Mammary epithelial cell (primary cell): ENCODE measurements at regions of chr6 and their contacts with region 1.

Region 1: GRCh38 chr6:166556871-166557322 is 29.6 kb downstream of the RAMACL start:
- DNase-seq: peak; percentile 99
- H3K4me3 ChIP-seq: peak overlapping the region in 1 of 3 experiments; percentile 17
- H3K27ac ChIP-seq: peak overlapping the region; percentile 83
- H3K4me1 ChIP-seq: peaks cover 57% of the 10 kb centered on the region
- H3K27me3 ChIP-seq: no peaks in the 10 kb centered on the region
- CTCF ChIP-seq: peak in 1 of 2 donors; percentile 2

Region 2: GRCh38 chr6:166567107-166567506 is 10.2 kb after region 1 on chr6:
- CTCF ChIA-PET with region 1: no interaction called
- dilution Hi-C with region 1: no loop called
- in situ Hi-C with region 1: no loop called
- intact Hi-C with region 1: loop called (anchors 1 kb)
- DNase-seq: peak; percentile 98
- H3K4me3 ChIP-seq: no peak overlapping the region
- H3K27ac ChIP-seq: peak overlapping the region; percentile 69
- H3K4me1 ChIP-seq: peaks cover 28% of the 10 kb centered on the region
- H3K27me3 ChIP-seq: no peaks in the 10 kb centered on the region
- CTCF ChIP-seq: no peak

Region 3: DNA sequence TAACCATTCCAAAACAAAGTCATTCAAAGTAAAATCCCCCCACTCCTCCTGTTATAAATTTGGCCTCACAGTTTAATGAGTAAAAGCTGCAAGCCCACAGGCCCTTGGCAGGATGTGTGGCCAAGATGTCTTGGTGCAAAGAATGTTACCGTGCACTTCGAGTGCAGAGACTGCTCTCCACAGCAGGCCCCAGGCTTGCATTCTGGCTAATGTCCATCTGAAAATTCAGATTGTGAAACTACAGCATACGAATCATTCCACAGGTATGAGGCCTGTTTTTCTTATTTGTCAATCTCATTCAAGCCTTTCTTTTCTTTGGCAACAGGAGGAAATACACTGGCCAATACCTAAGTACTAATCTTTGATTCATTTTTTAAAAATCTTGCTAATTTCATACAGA is 63.0 kb after region 1 on chr6:
- CTCF ChIA-PET with region 1: no interaction called
- dilution Hi-C with region 1: no loop called
- in situ Hi-C with region 1: no loop called
- intact Hi-C with region 1: loop called (anchors 1 kb)
- DNase-seq: peak; percentile 87
- H3K4me3 ChIP-seq: no peak overlapping the region
- H3K27ac ChIP-seq: peak overlapping the region; percentile 61
- H3K4me1 ChIP-seq: peaks cover 46% of the 10 kb centered on the region
- H3K27me3 ChIP-seq: no peaks in the 10 kb centered on the region
- CTCF ChIP-seq: no peak